ENCODE measurements at regions of chr1 and their contacts with region 1.

Region 1: DNA sequence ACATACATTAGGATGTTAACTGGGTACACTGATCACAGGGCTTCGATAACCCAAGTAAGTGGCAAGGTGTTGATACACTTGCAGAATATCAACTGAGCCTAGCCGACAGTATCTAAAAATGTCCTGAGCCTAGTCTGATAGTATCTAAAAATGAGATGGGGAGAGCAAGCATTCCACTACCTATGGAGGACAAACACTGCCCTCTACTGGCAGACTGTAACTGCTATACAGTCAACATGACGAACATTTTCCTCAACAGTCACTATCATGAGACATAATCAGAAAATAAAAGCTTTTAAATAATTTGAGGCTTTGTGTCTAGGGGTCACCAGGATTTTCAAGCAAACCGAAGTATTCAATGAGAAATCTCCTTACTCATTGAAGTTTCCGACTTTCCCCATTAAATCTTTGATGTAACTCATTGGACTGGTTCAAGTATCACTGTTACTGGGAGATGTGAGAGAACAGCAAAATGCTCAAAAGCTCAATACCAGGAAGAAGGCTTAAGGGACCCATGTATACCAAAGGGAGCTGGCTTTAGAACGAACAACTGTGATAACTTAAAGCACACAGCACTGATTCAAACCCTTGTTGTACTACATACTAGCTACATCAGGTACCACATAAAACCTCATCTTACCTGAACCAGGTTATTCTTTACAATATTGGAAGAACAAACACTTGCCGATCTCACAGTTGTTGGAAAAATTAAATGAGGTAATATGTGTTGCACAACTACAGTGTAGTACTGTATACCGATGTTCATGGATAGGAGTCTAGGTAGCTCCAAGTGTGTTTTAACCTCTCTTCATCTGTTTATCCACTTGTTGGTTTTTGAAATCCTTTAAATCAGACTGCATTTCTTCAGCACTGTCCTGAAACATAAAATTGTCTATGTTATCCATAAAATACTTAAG is 31.1 kb upstream of the SLC45A3 start:
- DNase-seq: peak; percentile 42
- H3K4me3 Mint-ChIP-seq: no peak overlapping the region
- H3K27ac Mint-ChIP-seq: peak overlapping the region; percentile 56
- H3K4me1 Mint-ChIP-seq: peaks cover 16% of the 10 kb centered on the region
- H3K27me3 Mint-ChIP-seq: no peaks in the 10 kb centered on the region

Region 2: DNA sequence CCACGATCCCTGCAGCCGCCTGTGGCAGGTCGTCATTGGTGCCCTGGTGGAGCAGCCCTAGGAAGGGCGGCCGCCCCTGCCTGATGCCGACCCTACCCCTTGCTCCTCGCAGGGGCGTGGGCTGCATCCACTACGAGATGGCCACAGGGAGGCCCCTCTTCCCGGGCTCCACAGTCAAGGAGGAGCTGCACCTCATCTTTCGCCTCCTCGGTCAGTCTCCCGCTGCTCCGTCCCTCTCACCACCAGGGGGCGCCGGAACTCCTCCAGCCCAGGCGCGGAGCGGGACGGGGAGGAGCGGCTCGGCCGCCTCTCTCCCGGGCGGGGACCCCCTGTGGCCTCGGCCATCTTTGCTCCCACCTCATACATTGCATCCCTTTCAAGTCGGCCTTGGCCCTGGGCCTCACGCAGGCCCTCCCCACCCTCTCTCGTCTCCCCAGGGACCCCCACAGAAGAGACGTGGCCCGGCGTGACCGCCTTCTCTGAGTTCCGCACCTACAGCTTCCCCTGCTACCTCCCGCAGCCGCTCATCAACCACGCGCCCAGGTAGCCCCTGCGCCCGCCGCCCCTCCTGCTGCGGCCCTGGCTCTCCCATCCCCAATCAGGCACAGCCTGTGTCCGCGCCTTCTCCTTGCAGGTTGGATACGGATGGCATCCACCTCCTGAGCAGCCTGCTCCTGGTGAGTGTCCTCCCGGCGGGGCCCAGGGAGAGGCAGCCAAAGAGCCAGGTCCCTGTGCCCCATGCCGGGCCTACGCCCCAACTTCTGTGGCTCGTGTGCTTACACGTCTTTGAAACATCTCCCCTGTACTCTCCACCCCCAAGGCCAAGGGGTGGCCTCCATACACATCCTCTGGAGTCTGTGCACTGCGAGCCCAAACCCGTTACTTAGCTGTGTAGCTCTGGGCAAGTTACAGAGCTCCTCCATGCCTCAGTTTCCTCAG is 182.2 kb before region 1 on chr1:
- intact Hi-C with region 1: loop called (anchors 1 kb)
- DNase-seq: peak; percentile 68
- H3K4me3 Mint-ChIP-seq: no peak overlapping the region
- H3K27ac Mint-ChIP-seq: no peak overlapping the region
- H3K4me1 Mint-ChIP-seq: no peaks in the 10 kb centered on the region
- H3K27me3 Mint-ChIP-seq: no peaks in the 10 kb centered on the region

Region 3: DNA sequence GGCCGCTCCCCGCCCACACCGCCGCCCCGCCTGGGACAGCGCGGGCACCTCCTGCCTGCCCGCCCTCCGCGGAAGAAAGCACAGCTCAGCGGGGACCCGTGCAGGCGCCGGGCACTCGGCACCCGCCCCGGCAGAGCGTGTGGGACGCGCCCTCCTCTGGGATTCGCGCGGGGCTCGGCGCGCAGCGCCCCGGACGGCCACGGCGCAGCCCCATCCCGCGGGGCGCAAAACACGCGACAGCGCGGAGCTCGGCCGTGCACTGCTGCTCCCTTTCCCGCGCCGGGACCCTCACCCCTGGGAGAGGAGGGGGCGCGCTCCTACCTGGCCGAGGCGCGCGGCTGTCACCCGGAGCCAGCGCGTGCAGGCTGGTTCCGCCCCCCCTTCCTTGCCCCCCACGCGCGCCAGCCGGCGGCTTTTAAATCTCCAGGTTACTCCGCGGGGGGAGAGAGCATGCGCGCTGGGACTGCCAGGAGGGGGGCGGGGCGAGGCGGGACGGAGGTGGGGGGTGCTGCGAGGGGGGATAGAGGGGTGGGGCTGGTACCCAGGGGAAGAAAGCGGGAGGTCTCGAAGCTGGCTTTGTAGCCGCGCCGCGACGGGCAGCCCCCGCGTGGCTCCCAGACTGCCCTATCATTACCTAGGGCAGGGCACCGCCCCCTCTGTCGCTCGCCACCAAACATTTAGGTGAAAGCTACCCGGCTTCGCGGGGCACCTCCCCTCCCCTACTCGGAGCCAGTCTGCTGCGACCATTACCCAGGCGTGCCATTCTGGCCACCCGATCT is 31.1 kb before region 1 on chr1 and contains the start of gene SLC45A3:
- intact Hi-C with region 1: loop called (anchors 1 kb)
- DNase-seq: no peak
- H3K4me3 Mint-ChIP-seq: peak within 1 kb of the TSS; percentile 82
- H3K27ac Mint-ChIP-seq: no peak within 1 kb of the TSS
- H3K4me1 Mint-ChIP-seq: peaks cover 14% of the 10 kb centered on the region
- H3K27me3 Mint-ChIP-seq: peaks cover 33% of the 10 kb centered on the region
- total RNA-seq, gene SLC45A3: 0.81 and 1.1 TPM in 2 replicates